Body of pancreas (tissue), 4 donors: ENCODE measurements at regions of chr5 and their contacts with region 1.

Region 1: GRCh38 chr5:147809830-147810666 is 21.4 kb downstream of the SPINK1 start:
- DNase-seq: no peak
- ATAC-seq: peak; percentile 57
- H3K4me3 ChIP-seq: no peak overlapping the region
- H3K27ac ChIP-seq: peak overlapping the region in 1 of 4 donors; percentile 14
- H3K4me1 ChIP-seq: peaks cover 7% of the 10 kb centered on the region
- H3K27me3 ChIP-seq: no peaks in the 10 kb centered on the region
- CTCF ChIP-seq: no peak
- POLR2A ChIP-seq: no peak

Region 2: DNA sequence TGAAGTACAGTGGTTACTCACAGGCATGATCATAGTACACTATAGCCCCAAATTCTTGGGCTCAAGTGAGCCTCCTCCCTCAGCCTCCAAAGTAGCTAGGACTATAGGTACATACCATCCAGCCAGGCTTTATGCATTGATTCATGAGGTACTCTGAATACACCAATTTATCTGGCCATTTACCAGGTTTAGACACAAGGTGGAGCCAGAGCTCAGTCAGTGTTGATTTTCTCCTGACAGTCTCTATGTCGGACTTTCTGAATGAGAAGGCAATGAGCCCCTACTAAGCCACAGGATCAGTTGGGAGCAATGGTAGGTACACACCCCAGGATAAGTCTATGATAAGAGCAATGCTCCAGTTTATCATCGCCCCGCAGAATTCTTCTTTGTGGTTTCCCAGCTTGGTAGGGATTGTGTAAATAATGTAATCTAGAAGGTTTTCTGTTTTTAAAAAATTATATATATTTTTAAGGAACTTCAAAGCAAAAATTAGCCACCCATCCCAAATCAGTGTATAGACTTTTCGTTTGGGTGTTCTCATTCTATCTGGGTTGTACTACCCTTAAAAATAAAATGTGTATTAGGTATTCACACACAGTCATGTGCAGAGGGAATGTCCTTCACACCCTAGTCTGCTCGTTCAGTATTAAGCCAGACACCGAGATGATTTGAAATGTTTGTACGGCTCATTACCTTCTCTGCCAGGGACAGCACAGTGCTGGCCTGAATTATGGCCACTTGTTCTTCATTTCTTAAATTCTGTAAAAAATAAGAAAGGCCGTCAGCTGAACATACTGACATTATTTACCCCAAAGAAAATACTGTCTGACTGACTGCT is 181.8 kb before region 1 on chr5:
- intact Hi-C with region 1: loop called (anchors 5 kb)
- DNase-seq: peak; percentile 64 to 78 (median 71)
- ATAC-seq: peak; percentile 94
- H3K4me3 ChIP-seq: no peak overlapping the region
- H3K27ac ChIP-seq: no peak overlapping the region
- H3K4me1 ChIP-seq: peaks cover 15% of the 10 kb centered on the region
- H3K27me3 ChIP-seq: no peaks in the 10 kb centered on the region
- CTCF ChIP-seq: peak; percentile 63 to 90 (median 88)
- POLR2A ChIP-seq: no peak

Region 3: DNA sequence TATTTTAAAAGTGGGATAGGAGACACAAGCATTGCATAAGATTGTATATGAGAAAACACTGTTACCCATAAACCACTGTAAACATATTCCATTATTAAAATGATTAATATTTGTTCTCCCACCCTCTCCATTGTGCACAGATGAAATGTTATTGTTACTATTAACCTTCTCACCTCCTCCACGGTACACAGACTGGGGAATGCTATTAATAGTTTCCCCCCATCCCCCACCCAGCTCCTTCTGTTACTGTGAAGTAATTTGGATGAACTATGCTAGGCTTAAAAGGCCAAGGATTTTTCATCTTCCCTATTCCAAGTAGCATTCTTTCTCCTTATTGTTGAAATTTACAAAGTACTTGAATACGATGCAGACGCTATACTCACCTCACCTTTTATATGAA is 118.9 kb before region 1 on chr5:
- intact Hi-C with region 1: no loop called
- DNase-seq: no peak
- ATAC-seq: no peak
- H3K4me3 ChIP-seq: no peak overlapping the region
- H3K27ac ChIP-seq: no peak overlapping the region
- H3K4me1 ChIP-seq: peaks cover 7% of the 10 kb centered on the region
- H3K27me3 ChIP-seq: no peaks in the 10 kb centered on the region
- CTCF ChIP-seq: no peak
- POLR2A ChIP-seq: no peak

Region 4: DNA sequence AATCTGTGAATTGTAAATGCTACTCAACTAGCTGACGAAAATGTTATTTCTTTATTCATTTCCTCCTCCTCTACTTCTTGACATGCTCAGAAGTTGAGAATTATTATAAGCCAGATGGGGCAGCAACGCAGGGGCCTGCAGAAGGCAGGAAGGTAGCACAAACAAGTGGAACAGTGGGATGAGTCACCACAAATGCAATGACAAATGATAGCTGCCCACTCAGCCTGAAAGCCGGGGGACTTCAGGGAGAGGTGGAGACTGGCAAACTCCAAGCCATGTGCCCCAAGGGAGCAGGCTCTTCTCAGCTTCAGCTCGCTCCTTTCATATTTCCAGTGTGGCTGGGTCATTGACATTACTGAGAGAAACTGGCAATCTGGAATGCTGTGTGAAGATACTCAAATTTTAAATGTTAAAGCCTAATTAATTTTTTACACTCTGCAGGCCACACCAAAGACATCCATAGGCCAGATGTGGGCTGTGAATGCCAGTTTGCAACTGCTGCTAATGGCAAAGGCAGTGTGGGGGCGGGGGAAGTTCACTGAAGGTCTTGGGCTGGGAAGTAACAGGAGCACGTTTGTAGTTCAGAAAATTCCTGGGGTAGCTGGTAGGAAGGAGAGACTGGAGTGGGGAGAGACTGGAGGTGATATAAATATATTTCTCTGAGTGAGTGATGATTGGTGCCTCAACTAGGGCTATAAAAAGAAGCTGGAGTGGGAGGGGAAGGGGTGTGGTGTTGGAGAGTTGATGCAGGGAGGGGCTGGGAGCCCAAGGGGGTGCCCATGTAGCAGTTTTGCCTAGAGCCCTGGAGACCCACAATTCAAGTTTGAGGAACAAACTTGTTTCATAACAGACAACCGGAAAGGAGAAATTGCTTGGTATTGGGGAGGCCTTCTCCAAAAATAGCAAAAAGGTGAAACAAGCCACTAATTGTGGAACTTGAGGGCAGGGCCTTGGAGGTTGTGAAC is 995.6 kb after region 1 on chr5:
- intact Hi-C with region 1: no loop called
- DNase-seq: peak in 1 of 4 donors; percentile 26
- ATAC-seq: no peak
- H3K4me3 ChIP-seq: no peak overlapping the region
- H3K27ac ChIP-seq: no peak overlapping the region
- H3K4me1 ChIP-seq: no peaks in the 10 kb centered on the region
- H3K27me3 ChIP-seq: no peaks in the 10 kb centered on the region
- CTCF ChIP-seq: no peak
- POLR2A ChIP-seq: no peak